ENCODE measurements at regions of chr5 and their contacts with region 1.

Region 1: GRCh38 chr5:53478411-53479044 is 1.9 kb upstream of the FST start:
- DNase-seq: peak; percentile 47
- H3K4me3 Mint-ChIP-seq: peak overlapping the region; percentile 78
- H3K27ac Mint-ChIP-seq: peak overlapping the region; percentile 55
- H3K4me1 Mint-ChIP-seq: peaks cover 15% of the 10 kb centered on the region
- H3K27me3 Mint-ChIP-seq: no peaks in the 10 kb centered on the region
- CTCF ChIP-seq: peak; percentile 60

Region 2: GRCh38 chr5:53170748-53171349 is 307.7 kb before region 1 on chr5:
- CTCF ChIA-PET with region 1: no interaction called
- intact Hi-C with region 1: loop called (anchors 5 kb)
- DNase-seq: peak; percentile 35
- H3K4me3 Mint-ChIP-seq: no peak overlapping the region
- H3K27ac Mint-ChIP-seq: no peak overlapping the region
- H3K4me1 Mint-ChIP-seq: no peaks in the 10 kb centered on the region
- H3K27me3 Mint-ChIP-seq: no peaks in the 10 kb centered on the region
- CTCF ChIP-seq: peak; percentile 50

Region 3: DNA sequence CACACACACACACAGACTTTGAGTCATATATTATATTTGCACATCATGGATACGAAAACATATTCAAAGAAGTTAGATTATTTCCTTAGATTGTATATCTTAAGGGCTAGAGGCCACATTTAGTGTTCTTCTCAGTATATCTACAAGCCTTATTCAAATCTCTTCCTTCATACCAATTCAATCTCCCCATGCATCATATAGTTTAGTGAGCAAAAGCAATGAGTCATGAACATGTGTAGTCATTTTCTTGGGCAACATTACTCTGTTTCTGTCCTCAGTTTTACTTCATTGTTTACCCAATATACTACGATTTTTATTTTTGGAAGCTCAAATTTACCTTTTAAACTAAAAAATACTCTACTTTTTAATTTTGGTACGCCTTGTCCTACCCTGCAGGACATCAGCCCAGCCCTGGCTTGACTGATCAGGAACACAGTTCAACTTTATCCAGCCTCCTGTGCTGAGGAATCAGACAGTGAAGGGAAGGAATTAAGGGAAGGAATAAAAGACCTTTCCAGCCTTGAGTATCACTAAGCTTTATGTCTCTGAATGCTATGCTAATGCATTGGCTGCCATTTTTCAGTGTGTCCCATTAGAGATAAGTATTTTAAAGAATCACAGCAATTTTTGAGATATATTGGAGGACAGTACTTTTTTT is 99.8 kb before region 1 on chr5:
- CTCF ChIA-PET with region 1: no interaction called
- intact Hi-C with region 1: no loop called
- DNase-seq: no peak
- H3K4me3 Mint-ChIP-seq: no peak overlapping the region
- H3K27ac Mint-ChIP-seq: peak overlapping the region; percentile 29
- H3K4me1 Mint-ChIP-seq: peaks cover 11% of the 10 kb centered on the region
- H3K27me3 Mint-ChIP-seq: no peaks in the 10 kb centered on the region
- CTCF ChIP-seq: no peak

Region 4: DNA sequence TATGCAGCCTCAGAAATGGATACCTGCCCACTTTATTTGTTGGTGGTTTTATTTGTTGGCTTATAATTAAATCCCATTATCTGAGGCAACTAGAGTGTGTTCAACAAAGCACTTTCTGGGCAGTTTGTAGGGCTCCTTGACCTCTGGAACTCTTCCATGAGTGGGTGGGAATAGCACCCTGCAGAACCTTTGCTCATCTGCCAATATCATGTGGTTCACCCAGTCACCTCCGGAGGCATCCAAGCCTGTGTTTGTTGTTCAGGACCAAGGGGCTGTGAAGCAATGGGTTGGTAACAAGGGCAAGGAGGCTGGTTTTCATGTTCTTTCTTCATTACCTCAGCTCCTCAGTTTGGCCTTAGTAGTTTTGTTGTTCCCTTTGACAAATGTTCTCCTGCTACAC is 395.9 kb after region 1 on chr5:
- CTCF ChIA-PET with region 1: no interaction called
- intact Hi-C with region 1: loop called (anchors 5 kb)
- DNase-seq: peak; percentile 9
- H3K4me3 Mint-ChIP-seq: no peak overlapping the region
- H3K27ac Mint-ChIP-seq: no peak overlapping the region
- H3K4me1 Mint-ChIP-seq: no peaks in the 10 kb centered on the region
- H3K27me3 Mint-ChIP-seq: no peaks in the 10 kb centered on the region
- CTCF ChIP-seq: no peak